K562 (cell line): ENCODE measurements at regions of chr11 and their contacts with region 1.

Region 1: GRCh38 chr11:60970369-60970774 is 1.1 kb upstream of the CD6 start:
- DNase-seq: peak; percentile 64 to 70 (median 70)
- ATAC-seq: peak; percentile 97
- H3K4me3 ChIP-seq: no peak overlapping the region
- H3K27ac ChIP-seq: no peak overlapping the region
- H3K4me1 ChIP-seq: peaks cover 0 to 4% of the 10 kb centered on the region in 2 experiments; a peak in 1 of 5 replicates
- H3K27me3 ChIP-seq: peaks cover 24 to 57% of the 10 kb centered on the region in 2 experiments
- CTCF ChIP-seq: peak; percentile 79 to 91 (median 88)
- EP300 ChIP-seq: no peak
- POLR2A ChIP-seq: no peak
- RAD21 ChIP-seq: peak; percentile 73 to 83

Region 2: DNA sequence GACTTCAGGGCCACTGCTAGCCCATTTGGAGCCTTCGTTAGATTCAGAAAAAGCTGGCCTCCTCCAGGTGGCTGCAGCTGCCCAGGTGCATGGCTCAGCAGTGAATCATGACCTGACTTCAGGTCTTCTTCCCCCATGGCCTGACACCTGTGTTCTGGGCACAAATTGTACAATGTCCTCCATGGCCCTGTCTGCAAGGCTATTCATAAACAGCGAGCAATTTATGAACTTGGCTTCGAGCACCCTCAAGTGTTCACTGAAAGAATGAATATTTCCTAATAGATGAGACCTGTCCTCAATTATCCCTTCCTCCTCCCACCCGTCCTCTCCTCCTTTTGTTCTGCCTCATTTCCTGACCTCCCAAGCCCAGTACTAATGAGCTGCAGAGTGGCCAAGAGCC is 203.1 kb after region 1 on chr11:
- CTCF ChIA-PET with region 1: interaction called, 4 read pairs
- POLR2A ChIA-PET with region 1: no interaction called
- in situ Hi-C with region 1: no loop called
- intact Hi-C with region 1: loop called (anchors 1 kb)
- DNase-seq: peak in 3 of 4 experiments; percentile 21 to 57 (median 46)
- ATAC-seq: peak; percentile 89
- H3K4me3 ChIP-seq: no peak overlapping the region
- H3K27ac ChIP-seq: no peak overlapping the region
- H3K4me1 ChIP-seq: no peaks in the 10 kb centered on the region; a peak in 1 of 5 replicates
- H3K27me3 ChIP-seq: peaks cover 26 to 45% of the 10 kb centered on the region in 2 experiments
- CTCF ChIP-seq: peak; percentile 64 to 79 (median 75)
- EP300 ChIP-seq: no peak
- POLR2A ChIP-seq: no peak
- RAD21 ChIP-seq: peak; percentile 44 to 83